Posterior vena cava (tissue), 2 donors: ENCODE measurements at regions of chr19 and their contacts with region 1.

Region 1: GRCh38 chr19:2236314-2237050 is at the starts of genes PLEKHJ1 and SF3A2:
- DNase-seq: peak; percentile 99
- total RNA-seq, gene PLEKHJ1: 24.3 to 27.6 TPM
- total RNA-seq, gene SF3A2: 35.0 to 36.6 TPM

Region 2: GRCh38 chr19:1141944-1142343 is 1094.5 kb before region 1 on chr19:
- intact Hi-C with region 1: no loop called
- DNase-seq: no peak

Region 3: GRCh38 chr19:2135474-2136402 is 100.7 kb before region 1 on chr19:
- intact Hi-C with region 1: no loop called
- DNase-seq: peak; percentile 67

Region 4: GRCh38 chr19:2151339-2152229 is 84.9 kb before region 1 on chr19 and contains the start of gene AP3D1:
- intact Hi-C with region 1: loop called in 1 of 2 experiments (anchors 10 kb)
- DNase-seq: peak; percentile 100
- total RNA-seq, gene AP3D1: 73.9 to 93.3 TPM

Region 5: GRCh38 chr19:2164020-2164998 is 72.2 kb before region 1 on chr19:
- intact Hi-C with region 1: loop called (anchors 5 to 10 kb)
- DNase-seq: peak; percentile 91

Region 6: DNA sequence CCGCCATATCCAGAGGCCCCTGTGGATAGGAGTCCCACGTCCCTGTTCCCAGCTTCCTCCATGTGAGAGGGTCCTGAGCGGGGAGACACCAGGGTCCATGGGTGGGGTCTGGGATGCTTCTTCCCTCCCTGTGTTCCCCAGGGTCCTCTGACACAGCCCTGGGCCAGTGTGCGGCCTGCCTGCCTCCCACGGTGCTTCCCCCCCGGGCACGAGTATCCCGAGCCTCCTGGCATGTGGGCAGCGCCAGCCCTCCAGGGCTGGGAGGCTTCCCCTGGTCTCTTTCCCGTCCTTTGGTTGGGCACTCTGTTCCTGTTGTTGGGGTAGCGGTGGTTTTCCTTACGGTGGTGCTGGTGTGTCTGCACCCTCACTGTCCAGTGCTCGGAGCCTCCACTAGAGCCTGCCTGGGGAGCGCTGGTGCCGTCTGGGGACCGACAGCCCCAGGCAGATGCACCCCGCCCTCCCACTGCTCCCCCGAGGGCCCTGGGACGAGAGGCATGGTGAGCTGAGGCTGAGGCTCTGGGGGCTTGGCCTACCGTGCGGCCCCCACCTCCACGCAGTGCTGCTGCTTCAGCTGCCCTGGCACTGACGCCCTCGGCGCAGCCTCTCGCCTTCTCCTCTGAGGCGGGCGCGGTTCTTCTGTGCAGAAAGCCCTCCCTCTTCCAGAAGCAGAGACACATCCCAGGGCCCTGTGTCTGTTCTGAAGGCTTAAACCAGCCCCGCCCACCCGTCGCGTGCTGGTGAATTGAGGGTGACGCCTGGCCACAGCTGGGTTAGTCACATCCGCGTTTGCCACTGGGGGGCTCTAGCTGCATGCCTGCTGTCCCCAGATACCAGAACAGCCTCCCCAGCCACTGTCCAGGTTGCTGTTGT is 28.3 kb before region 1 on chr19:
- intact Hi-C with region 1: no loop called
- DNase-seq: peak; percentile 91

Region 7: DNA sequence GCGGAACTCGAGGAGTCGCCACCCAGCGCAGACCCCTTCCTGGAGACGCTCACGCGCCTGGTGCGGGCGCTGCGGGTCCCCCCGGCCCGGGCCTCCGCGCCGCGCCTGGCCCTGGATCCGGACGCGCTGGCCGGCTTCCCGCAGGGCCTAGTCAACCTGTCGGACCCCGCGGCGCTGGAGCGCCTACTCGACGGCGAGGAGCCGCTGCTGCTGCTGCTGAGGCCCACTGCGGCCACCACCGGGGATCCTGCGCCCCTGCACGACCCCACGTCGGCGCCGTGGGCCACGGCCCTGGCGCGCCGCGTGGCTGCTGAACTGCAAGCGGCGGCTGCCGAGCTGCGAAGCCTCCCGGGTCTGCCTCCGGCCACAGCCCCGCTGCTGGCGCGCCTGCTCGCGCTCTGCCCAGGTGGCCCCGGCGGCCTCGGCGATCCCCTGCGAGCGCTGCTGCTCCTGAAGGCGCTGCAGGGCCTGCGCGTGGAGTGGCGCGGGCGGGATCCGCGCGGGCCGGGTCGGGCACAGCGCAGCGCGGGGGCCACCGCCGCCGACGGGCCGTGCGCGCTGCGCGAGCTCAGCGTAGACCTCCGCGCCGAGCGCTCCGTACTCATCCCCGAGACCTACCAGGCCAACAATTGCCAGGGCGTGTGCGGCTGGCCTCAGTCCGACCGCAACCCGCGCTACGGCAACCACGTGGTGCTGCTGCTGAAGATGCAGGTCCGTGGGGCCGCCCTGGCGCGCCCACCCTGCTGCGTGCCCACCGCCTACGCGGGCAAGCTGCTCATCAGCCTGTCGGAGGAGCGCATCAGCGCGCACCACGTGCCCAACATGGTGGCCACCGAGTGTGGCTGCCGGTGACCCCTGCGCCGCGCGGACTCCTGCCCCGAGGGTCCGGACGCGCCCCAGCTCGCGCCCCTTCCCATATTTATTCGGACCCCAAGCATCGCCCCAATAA is 14.9 kb after region 1 on chr19:
- intact Hi-C with region 1: loop called in 1 of 2 experiments (anchors 1 kb)
- DNase-seq: no peak

Region 8: GRCh38 chr19:2273356-2274184 is 37.1 kb after region 1 on chr19:
- intact Hi-C with region 1: loop called in 1 of 2 experiments (anchors 2 kb)
- DNase-seq: peak; percentile 92

Region 9: GRCh38 chr19:2371656-2372055 is 135.2 kb after region 1 on chr19:
- intact Hi-C with region 1: loop called in 1 of 2 experiments (anchors 1 kb)
- DNase-seq: no peak

Region 10: GRCh38 chr19:2494444-2495129 is 258.1 kb after region 1 on chr19:
- intact Hi-C with region 1: no loop called
- DNase-seq: peak; percentile 96